T-cell (primary cell): ENCODE measurements at regions of chr17 and their contacts with region 1.

Region 1: DNA sequence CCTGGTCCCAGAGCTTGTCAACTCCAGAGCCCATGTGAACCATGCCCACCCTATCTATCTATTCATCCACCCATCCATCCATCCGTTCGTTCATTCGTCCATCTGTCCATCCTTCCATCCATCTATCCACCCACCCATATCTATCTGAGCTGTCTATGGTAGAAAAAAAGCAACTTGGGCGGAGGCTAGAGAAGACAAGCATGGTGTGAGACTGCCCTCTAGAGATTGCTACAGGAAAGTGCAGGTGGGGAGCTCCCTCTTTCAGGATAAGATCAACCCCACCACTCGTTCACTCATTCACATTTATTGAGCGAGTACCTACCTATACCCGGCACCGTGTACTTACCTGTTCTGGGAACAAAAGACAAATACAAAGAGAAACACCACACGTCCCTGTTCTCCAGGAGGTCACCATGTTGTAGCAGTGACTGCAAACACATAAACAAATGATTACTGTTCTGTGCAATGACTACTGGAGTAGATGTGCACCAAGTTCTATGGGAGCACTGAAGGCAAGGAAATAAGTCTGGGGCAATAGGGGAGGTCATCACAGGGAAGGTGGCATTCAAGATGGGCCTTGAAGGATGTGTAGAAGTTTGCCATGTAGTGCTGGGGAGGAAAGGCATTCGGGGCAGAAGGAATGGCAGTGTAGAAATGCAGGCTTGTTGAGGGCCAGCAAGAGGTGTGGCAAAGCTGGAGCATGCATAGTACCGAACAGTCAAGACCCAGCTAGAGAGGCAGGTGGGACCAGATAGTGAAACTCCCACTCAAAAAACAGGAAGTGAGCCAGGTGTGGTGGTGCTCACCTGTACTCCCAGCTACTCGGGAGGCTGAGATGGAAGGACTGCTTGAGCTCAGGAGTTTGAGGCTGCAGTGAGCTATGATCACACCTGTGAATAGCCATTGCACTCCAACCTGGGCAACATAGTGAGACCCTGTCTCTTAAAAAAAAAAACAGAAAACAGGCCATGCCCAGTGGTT is 13.4 kb upstream of the ATP5MC1 start:
- DNase-seq: peak; percentile 17 to 87 (median 44)
- ATAC-seq: peak; percentile 82 to 88 (median 86)
- H3K4me3 ChIP-seq: no peak overlapping the region
- H3K4me3 Mint-ChIP-seq: no peak overlapping the region
- H3K27ac ChIP-seq: no peak overlapping the region
- H3K27ac Mint-ChIP-seq: no peak overlapping the region
- H3K4me1 ChIP-seq: peaks cover 0 to 3% of the 10 kb centered on the region in 2 experiments
- H3K4me1 Mint-ChIP-seq: peaks cover 0 to 3% (median 2%) of the 10 kb centered on the region in 3 donors
- H3K27me3 ChIP-seq: peaks cover 0 to 28% of the 10 kb centered on the region in 2 experiments
- H3K27me3 Mint-ChIP-seq: peaks cover 3% of the 10 kb centered on the region in 2 donors

Region 2: DNA sequence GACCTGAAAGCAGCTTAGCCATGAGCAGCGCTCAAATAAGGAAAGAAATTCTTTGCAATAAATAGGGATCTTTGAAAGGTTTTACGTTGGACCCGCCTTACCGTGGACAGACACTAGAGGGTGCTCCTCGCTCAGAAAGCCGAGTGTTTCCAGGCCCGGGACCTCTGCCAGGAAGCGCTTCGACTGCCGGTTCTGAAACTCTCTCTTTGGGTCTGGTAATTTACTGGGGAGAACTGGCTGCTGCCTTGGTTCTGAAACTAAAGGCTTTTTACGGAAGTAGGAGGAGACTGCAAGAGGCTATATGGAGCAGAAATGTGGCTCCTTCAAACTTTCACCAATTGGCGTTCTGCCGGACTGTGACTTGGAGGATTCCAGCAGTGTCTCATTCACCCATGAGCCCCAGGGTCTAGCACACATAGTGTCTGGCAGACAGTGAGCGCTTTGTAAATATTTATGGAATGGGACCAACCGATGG is 207.5 kb before region 1 on chr17:
- CTCF ChIA-PET with region 1: interaction called, 5 to 10 read pairs
- POLR2A ChIA-PET with region 1: no interaction called
- DNase-seq: peak; percentile 11 to 81 (median 60)
- ATAC-seq: peak; percentile 68 to 82 (median 78)
- H3K4me3 ChIP-seq: no peak overlapping the region
- H3K4me3 Mint-ChIP-seq: peak overlapping the region in 2 of 3 donors; percentile 17 to 42
- H3K27ac ChIP-seq: no peak overlapping the region
- H3K27ac Mint-ChIP-seq: no peak overlapping the region
- H3K4me1 ChIP-seq: peaks cover 0 to 9% of the 10 kb centered on the region in 2 experiments
- H3K4me1 Mint-ChIP-seq: peaks cover 5 to 6% (median 5%) of the 10 kb centered on the region in 3 donors
- H3K27me3 ChIP-seq: peaks cover 4 to 36% of the 10 kb centered on the region in 2 experiments
- H3K27me3 Mint-ChIP-seq: peaks cover 41 to 47% of the 10 kb centered on the region in 2 donors

Region 3: GRCh38 chr17:48724251-48725003 is 154.8 kb before region 1 on chr17:
- CTCF ChIA-PET with region 1: interaction called, 5 to 15 read pairs
- POLR2A ChIA-PET with region 1: no interaction called
- DNase-seq: peak; percentile 35 to 83 (median 69)
- ATAC-seq: peak; percentile 61 to 80 (median 70)
- H3K4me3 ChIP-seq: peak overlapping the region in 1 of 2 donors; percentile 61
- H3K4me3 Mint-ChIP-seq: peak overlapping the region; percentile 57 to 78 (median 63)
- H3K27ac ChIP-seq: no peak overlapping the region
- H3K27ac Mint-ChIP-seq: no peak overlapping the region
- H3K4me1 ChIP-seq: peaks cover 4 to 64% of the 10 kb centered on the region in 2 experiments
- H3K4me1 Mint-ChIP-seq: peaks cover 40 to 65% (median 47%) of the 10 kb centered on the region in 3 donors
- H3K27me3 ChIP-seq: peaks cover 28 to 99% of the 10 kb centered on the region in 2 experiments
- H3K27me3 Mint-ChIP-seq: peaks cover 78 to 94% of the 10 kb centered on the region in 2 donors

Region 4: DNA sequence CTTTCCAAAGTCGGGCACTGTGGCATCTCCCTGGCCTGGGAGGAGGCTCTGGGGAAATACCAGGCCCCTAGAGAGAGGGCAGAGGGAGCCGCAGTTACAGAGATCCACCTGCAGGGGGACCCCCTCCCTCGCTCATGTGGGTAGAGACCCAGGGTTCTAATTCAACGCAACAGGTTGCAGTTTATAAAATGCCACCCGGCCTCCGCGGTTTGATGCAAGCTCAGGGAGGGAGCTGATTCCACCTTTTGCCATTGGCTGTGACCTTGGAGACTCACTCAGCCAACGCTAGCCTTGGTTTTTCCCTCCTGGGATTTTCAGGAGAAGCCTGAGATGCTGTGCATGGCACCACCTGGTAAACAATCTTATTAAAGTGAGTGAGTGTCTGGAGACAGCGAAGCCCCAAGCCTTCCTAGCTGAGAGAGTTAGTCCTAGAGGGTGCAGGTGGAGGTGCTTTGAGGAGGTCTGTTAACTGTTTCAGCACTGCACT is 74.2 kb before region 1 on chr17:
- CTCF ChIA-PET with region 1: interaction called, 22 to 96 read pairs
- POLR2A ChIA-PET with region 1: no interaction called
- DNase-seq: peak; percentile 14 to 77 (median 56)
- ATAC-seq: peak; percentile 71 to 84 (median 81)
- H3K4me3 ChIP-seq: no peak overlapping the region
- H3K4me3 Mint-ChIP-seq: no peak overlapping the region
- H3K27ac ChIP-seq: no peak overlapping the region
- H3K27ac Mint-ChIP-seq: no peak overlapping the region
- H3K4me1 ChIP-seq: peaks cover 0 to 4% of the 10 kb centered on the region in 2 experiments
- H3K4me1 Mint-ChIP-seq: peaks cover 0 to 2% (median 0%) of the 10 kb centered on the region in 3 donors
- H3K27me3 ChIP-seq: peaks cover 0 to 23% of the 10 kb centered on the region in 2 experiments
- H3K27me3 Mint-ChIP-seq: peaks cover 9 to 20% of the 10 kb centered on the region in 2 donors

Region 5: DNA sequence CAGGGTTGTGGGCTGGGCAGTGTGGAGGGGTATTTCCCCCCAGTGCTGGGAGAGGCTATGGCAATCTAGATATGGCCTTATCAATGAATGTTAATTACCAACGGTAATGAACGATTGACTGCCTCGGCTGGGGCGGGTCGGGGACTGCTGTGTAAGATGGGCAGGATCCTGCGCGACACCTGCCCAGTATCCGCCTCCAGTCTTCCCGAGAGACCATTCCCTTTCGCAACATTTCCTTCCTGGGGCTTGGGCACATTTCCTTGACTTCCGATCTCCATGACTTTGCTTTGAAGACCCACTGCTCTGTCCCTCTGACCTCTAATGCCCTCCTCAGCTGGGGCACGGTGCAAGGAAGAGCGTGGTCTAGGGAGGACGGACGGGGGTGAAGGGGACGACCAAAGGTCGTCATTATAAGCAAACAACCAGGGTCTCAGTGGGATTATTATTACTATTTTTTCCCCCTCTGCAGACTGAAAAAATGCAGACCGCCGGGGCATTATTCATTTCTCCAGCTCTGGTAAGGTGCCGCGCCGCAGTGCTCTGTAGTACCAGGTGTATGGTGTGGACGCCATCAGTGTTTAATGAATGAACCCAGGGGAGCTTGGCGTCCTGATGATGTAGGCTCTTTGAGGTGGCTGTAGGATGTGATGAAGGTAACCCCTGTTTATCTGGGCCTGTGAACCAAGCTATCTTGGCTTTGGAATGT is 13.9 kb after region 1 on chr17:
- CTCF ChIA-PET with region 1: interaction called, 14 to 18 read pairs
- POLR2A ChIA-PET with region 1: no interaction called
- DNase-seq: peak in 6 of 35 experiments; percentile 1 to 38 (median 8)
- ATAC-seq: no peak
- H3K4me3 ChIP-seq: peak overlapping the region; percentile 61 to 81
- H3K4me3 Mint-ChIP-seq: peak overlapping the region; percentile 83 to 92 (median 88)
- H3K27ac ChIP-seq: peak overlapping the region; percentile 93
- H3K27ac Mint-ChIP-seq: peak overlapping the region; percentile 91 to 93
- H3K4me1 ChIP-seq: peaks cover 4 to 20% of the 10 kb centered on the region in 2 experiments
- H3K4me1 Mint-ChIP-seq: peaks cover 23 to 31% (median 28%) of the 10 kb centered on the region in 3 donors
- H3K27me3 ChIP-seq: no peaks in the 10 kb centered on the region
- H3K27me3 Mint-ChIP-seq: no peaks in the 10 kb centered on the region

Region 6: DNA sequence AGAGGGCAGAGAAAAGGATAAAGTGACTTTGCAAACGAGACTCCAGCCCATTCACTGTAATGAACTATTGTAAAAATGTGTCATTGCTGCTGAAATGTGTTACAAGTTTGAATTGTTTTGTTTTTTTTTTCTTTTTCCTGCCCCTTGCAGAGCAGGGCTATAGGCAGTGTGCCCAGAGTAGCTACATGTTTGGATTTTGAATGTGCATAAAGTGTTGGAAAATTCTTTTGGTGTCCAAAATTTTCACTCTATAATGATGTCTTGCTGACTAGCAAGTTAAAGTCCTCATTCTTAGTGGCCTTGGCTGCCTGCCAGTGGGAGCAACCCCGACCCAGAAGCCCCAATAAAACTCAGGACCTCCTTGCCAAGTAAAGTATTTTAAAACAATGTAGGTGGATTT is 184.4 kb after region 1 on chr17:
- CTCF ChIA-PET with region 1: no interaction called
- POLR2A ChIA-PET with region 1: no interaction called
- DNase-seq: no peak
- ATAC-seq: no peak
- H3K4me3 ChIP-seq: no peak overlapping the region
- H3K4me3 Mint-ChIP-seq: no peak overlapping the region
- H3K27ac ChIP-seq: no peak overlapping the region
- H3K27ac Mint-ChIP-seq: no peak overlapping the region
- H3K4me1 ChIP-seq: no peaks in the 10 kb centered on the region
- H3K4me1 Mint-ChIP-seq: no peaks in the 10 kb centered on the region
- H3K27me3 ChIP-seq: peaks cover 2 to 4% of the 10 kb centered on the region in 2 experiments
- H3K27me3 Mint-ChIP-seq: peaks cover 3 to 6% of the 10 kb centered on the region in 2 donors

Region 7: DNA sequence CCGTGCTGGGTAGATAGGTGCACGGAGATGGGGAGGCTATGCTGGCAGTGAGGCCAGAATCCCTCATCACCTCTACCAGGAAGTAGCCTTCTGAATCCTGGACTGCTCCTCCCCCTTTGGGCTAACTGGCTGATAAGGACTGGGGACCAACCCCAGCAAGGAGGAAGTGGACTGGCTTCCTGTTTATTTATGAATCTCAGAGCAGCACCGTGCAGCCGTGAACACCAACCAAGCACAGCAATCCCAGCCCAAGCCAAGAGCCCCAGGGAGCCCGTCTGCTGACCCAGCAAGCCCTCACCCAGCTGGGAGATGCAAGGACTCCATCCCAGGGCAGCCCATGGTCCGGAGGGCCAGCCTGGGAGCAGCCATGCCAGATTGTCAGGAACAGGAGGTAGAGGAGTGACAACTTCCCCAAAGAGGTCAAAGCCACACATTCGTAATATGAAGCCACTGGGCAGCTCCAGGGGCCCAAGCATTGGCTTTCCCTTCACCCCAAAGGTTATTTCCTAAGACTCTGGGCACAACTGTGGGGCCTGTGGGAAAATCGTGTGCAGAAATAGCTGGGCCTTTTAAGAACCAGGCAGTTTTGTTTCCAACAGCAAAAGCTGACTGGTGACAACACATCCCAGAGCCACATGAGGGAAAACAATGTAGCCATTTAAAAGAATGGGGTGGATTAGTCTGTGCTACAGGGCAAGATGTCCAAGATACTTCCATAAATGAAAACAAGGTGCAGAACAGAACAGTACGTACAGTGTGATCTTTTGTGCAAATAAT is 511.5 kb after region 1 on chr17:
- CTCF ChIA-PET with region 1: interaction called in 1 of 2 experiments, 10 read pairs
- POLR2A ChIA-PET with region 1: no interaction called
- DNase-seq: peak in 5 of 35 experiments; percentile 3 to 49 (median 16)
- ATAC-seq: peak in 1 of 4 experiments; percentile 26
- H3K4me3 ChIP-seq: peak overlapping the region in 1 of 2 donors; percentile 33
- H3K4me3 Mint-ChIP-seq: peak overlapping the region; percentile 67 to 80 (median 75)
- H3K27ac ChIP-seq: peak overlapping the region; percentile 50
- H3K27ac Mint-ChIP-seq: peak overlapping the region; percentile 95 to 100
- H3K4me1 ChIP-seq: peaks cover 32 to 59% of the 10 kb centered on the region in 2 experiments
- H3K4me1 Mint-ChIP-seq: peaks cover 59 to 69% (median 59%) of the 10 kb centered on the region in 3 donors
- H3K27me3 ChIP-seq: no peaks in the 10 kb centered on the region
- H3K27me3 Mint-ChIP-seq: no peaks in the 10 kb centered on the region

Region 8: GRCh38 chr17:49456183-49456965 is 577.2 kb after region 1 on chr17:
- CTCF ChIA-PET with region 1: no interaction called
- POLR2A ChIA-PET with region 1: no interaction called
- DNase-seq: no peak
- ATAC-seq: no peak
- H3K4me3 ChIP-seq: no peak overlapping the region
- H3K4me3 Mint-ChIP-seq: no peak overlapping the region
- H3K27ac ChIP-seq: no peak overlapping the region
- H3K27ac Mint-ChIP-seq: no peak overlapping the region
- H3K4me1 ChIP-seq: peaks cover 0 to 13% of the 10 kb centered on the region in 2 experiments
- H3K4me1 Mint-ChIP-seq: peaks cover 0 to 15% (median 4%) of the 10 kb centered on the region in 3 donors
- H3K27me3 ChIP-seq: peaks cover 0 to 77% of the 10 kb centered on the region in 2 experiments
- H3K27me3 Mint-ChIP-seq: peaks cover 45 to 55% of the 10 kb centered on the region in 2 donors